Activated T-helper 2 cell treated with anti-CD3 and anti-CD28 coated beads, Interferon-gamma antibody, Interleukin-2, Interleukin-4, amounts not matched to agents 10 μg/mL and 5 μg/mL and 100 μg/mL, durations not matched to agents 14 hours and 24 hours and 36 hours (primary cell): ENCODE measurements at regions of chr1 and their contacts with region 1.

Region 1: GRCh38 chr1:179002552-179003345 is 22.9 kb upstream of the FAM20B start:
- DNase-seq: peak; percentile 41
- H3K4me3 Mint-ChIP-seq: no peak overlapping the region
- H3K27ac Mint-ChIP-seq: no peak overlapping the region
- H3K4me1 Mint-ChIP-seq: peaks cover 8% of the 10 kb centered on the region
- H3K27me3 Mint-ChIP-seq: peaks cover 3% of the 10 kb centered on the region

Region 2: GRCh38 chr1:178532392-178532791 is 470.4 kb before region 1 on chr1:
- intact Hi-C with region 1: loop called (anchors 2 kb)
- DNase-seq: peak; percentile 48
- H3K4me3 Mint-ChIP-seq: no peak overlapping the region
- H3K27ac Mint-ChIP-seq: no peak overlapping the region
- H3K4me1 Mint-ChIP-seq: no peaks in the 10 kb centered on the region
- H3K27me3 Mint-ChIP-seq: peaks cover 2% of the 10 kb centered on the region

Region 3: DNA sequence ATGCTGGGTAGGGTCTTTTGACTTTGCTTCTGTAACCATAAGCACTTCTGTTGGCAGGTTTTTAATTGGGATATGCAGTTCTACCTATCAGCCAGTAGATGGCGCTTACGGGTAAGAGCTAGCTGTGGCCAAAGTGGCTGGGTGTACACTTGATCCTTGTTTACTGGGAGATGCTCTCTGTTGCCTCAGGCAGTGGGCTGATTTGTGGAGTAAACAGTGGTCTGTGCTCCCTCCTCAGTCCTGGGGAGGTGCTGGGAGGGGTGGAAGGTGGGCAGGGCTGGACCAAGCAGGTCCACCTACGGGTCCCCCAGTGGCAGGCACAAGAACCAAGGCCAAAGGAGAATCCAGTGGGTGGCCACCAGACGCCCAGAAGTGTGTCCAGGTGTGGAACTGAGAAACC is 234.3 kb before region 1 on chr1:
- intact Hi-C with region 1: loop called (anchors 2 kb)
- DNase-seq: peak; percentile 9
- H3K4me3 Mint-ChIP-seq: no peak overlapping the region
- H3K27ac Mint-ChIP-seq: no peak overlapping the region
- H3K4me1 Mint-ChIP-seq: no peaks in the 10 kb centered on the region
- H3K27me3 Mint-ChIP-seq: no peaks in the 10 kb centered on the region

Region 4: DNA sequence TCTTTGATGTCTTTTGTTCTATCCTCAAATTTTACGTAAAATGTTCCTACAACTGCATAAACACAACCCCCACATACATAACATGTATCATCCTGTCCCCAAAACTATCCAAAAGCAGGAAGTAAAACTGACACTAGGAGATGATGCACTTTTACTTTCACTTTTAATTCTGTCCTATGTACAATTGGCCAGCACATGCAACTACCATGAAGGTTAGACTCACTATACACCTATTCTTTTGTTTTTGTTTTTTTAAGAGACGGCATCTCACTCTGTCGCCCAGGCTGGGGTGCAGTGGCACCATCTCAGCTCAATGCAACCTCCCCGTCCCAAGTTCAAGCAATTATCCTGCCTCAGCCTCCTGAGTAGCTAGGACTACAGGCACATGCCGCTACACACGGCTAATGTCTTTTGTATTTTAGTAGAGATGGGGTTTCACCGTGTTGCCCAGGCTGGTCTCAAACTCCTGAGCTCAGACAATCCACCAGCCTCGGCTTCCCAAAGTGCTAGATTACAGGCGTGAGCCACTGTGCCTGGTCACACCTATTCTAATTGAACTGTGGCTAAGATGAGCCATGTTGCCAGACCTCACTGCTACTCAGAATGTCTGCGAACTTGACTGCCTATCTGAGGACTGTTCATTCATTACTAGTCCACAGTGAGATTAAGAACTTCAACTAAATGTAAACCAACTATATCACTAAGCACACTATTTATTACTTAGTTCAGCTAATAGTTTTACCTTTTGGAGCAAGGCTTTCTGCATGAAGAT is 127.1 kb after region 1 on chr1:
- intact Hi-C with region 1: no loop called
- DNase-seq: peak; percentile 23
- H3K4me3 Mint-ChIP-seq: peak overlapping the region; percentile 72
- H3K27ac Mint-ChIP-seq: peak overlapping the region; percentile 93
- H3K4me1 Mint-ChIP-seq: peaks cover 13% of the 10 kb centered on the region
- H3K27me3 Mint-ChIP-seq: no peaks in the 10 kb centered on the region